Natural killer cell (primary cell): ENCODE measurements at regions of chr6 and their contacts with region 1.

Region 1: DNA sequence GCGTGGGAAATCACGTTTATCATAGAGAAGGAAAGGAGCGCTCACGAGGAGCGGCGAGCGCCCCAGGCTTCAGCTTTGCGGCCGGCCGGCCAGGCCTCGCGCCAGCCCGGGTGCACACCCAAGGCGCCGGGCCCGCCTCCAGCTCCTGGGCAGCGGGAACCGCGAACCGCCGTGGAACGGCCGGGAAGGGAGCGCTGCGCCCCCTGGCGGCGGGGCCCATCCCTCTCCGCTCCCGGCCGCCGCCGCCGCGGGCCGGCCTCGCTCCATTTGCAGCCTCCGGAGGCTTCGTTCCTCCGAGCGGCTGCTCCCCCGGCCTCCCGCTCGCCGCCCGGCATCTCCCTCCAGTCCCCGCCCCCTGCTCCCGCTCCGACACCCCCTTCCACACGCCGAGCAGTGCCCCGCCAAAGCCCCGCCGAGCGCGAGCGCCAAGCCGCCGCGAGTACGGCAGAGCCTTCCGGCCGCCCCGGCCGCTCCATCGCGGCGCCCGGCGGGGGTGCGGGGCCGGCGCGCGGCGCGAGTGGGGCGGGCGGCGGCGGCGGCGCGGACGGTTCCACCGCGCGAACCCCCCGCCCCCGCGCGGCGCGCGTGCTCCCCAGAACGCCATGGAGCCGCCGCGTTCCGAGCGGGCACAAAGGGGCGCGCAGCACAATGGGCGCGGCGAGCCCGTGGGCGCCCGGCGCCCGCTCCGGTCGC is 956 bp downstream of the BEND3 start:
- DNase-seq: peak; percentile 74 to 86
- ATAC-seq: peak; percentile 69 to 85 (median 78)
- H3K4me3 ChIP-seq: peak overlapping the region; percentile 25
- H3K4me3 Mint-ChIP-seq: peak overlapping the region; percentile 88
- H3K27ac ChIP-seq: no peak overlapping the region
- H3K27ac Mint-ChIP-seq: no peak overlapping the region
- H3K4me1 ChIP-seq: peaks cover 19% of the 10 kb centered on the region
- H3K4me1 Mint-ChIP-seq: peaks cover 18 to 19% of the 10 kb centered on the region in 2 donors
- H3K27me3 ChIP-seq: peaks cover 6% of the 10 kb centered on the region
- H3K27me3 Mint-ChIP-seq: peaks cover 5 to 19% of the 10 kb centered on the region in 2 donors
- CTCF ChIP-seq: peak; percentile 84

Region 2: DNA sequence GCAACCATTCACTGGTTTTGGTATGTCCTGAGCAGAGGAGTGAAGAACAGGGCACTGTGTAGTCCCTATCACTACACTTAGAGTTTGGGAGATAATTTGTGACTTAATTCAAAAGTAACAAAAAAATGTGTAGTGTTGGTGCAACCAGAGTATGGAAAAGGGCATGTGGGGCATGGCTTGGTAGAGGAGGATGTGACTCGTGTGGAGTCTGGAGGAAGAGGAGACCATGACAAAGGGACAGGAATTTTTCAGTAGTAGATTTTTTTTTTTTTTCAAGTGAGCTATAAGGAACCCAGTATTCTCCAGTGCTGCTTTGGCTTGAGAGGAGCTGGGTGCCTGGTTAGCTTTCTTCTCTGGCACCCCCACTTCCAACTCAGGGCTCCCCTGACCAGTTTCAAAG is 81.2 kb before region 1 on chr6:
- intact Hi-C with region 1: loop called (anchors 1 kb)
- DNase-seq: no peak
- ATAC-seq: no peak
- H3K4me3 ChIP-seq: no peak overlapping the region
- H3K4me3 Mint-ChIP-seq: no peak overlapping the region
- H3K27ac ChIP-seq: no peak overlapping the region
- H3K27ac Mint-ChIP-seq: no peak overlapping the region
- H3K4me1 ChIP-seq: peaks cover 9% of the 10 kb centered on the region
- H3K4me1 Mint-ChIP-seq: peaks cover 21 to 53% of the 10 kb centered on the region in 2 donors
- H3K27me3 ChIP-seq: no peaks in the 10 kb centered on the region
- H3K27me3 Mint-ChIP-seq: no peaks in the 10 kb centered on the region
- CTCF ChIP-seq: no peak

Region 3: GRCh38 chr6:107443608-107444267 is 329.4 kb after region 1 on chr6:
- intact Hi-C with region 1: no loop called
- DNase-seq: no peak
- ATAC-seq: no peak
- H3K4me3 ChIP-seq: no peak overlapping the region
- H3K4me3 Mint-ChIP-seq: no peak overlapping the region
- H3K27ac ChIP-seq: no peak overlapping the region
- H3K27ac Mint-ChIP-seq: no peak overlapping the region
- H3K4me1 ChIP-seq: no peaks in the 10 kb centered on the region
- H3K4me1 Mint-ChIP-seq: peaks cover 12 to 36% of the 10 kb centered on the region in 2 donors
- H3K27me3 ChIP-seq: no peaks in the 10 kb centered on the region
- H3K27me3 Mint-ChIP-seq: no peaks in the 10 kb centered on the region
- CTCF ChIP-seq: no peak

Region 4: DNA sequence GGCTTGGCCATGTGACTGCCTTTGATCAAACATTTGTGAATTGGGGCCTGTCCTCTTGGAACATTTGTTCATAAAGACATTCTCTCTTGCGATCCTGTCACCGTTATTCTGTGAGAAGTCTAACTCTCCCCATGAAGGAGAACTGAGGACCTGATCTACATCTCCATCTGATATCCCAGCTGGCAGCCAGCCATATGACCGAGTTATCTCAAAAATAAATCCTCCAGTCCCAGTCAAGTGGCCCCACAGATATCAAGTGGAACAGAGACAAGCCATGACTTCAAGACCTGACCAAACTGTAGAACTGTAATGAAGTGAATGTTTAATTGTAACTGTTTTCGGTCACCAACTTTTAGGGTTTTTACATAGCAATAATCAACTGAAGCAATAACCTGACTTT is 1120.8 kb after region 1 on chr6:
- intact Hi-C with region 1: no loop called
- DNase-seq: no peak
- ATAC-seq: no peak
- H3K4me3 ChIP-seq: no peak overlapping the region
- H3K4me3 Mint-ChIP-seq: no peak overlapping the region
- H3K27ac ChIP-seq: no peak overlapping the region
- H3K27ac Mint-ChIP-seq: no peak overlapping the region
- H3K4me1 ChIP-seq: no peaks in the 10 kb centered on the region
- H3K4me1 Mint-ChIP-seq: peaks cover 23 to 66% of the 10 kb centered on the region in 2 donors
- H3K27me3 ChIP-seq: no peaks in the 10 kb centered on the region
- H3K27me3 Mint-ChIP-seq: no peaks in the 10 kb centered on the region
- CTCF ChIP-seq: no peak